OCI-LY7 (cell line): ENCODE measurements at regions of chr1 and their contacts with region 1.

Region 1: DNA sequence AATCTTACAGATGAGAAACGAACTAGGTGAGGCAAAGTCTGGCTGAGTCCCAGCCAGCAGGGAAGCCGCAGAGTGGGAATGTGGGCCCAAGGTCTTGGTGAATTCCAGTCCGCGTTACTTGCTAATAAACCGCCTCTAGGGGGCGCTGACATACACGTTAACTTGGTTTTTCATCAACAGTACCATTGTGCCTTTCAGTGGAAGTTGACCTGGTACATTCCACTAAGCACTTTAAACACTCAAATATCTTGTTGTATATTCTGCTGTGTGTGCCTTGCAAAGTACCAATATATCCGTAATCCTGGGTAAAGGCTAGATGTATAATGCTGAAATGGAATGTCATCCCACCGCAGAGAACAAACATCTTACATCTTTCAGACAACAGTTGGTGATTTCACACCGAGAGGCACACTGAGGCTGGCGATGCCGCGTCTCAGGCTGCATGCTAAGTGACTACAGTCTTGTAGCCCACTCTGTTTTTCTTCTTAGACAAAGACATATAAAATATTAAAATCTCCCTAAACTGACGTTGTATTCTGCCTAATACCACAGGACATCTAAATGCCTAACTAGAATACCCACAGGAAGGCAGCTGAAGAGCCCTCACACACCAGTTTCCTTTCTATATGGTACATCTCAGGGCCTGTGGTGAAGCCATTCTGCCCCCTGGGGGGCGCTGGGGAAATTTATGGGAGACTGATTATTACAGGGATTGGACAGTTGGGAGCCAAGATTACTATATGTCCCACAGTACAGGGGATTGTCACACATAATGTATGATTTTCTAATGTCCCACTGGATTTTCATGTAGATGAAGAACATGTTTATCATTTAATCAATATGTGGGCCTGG is 49.2 kb upstream of the C1orf198 start:
- DNase-seq: peak; percentile 84
- H3K4me3 ChIP-seq: no peak overlapping the region
- H3K27ac ChIP-seq: no peak overlapping the region
- H3K4me1 ChIP-seq: no peaks in the 10 kb centered on the region
- CTCF ChIP-seq: peak; percentile 90

Region 2: GRCh38 chr1:230632273-230632873 is 285.1 kb before region 1 on chr1:
- CTCF ChIA-PET with region 1: no interaction called
- POLR2A ChIA-PET with region 1: no interaction called
- intact Hi-C with region 1: loop called (anchors 5 kb)
- DNase-seq: peak; percentile 51
- H3K4me3 ChIP-seq: no peak overlapping the region
- H3K27ac ChIP-seq: no peak overlapping the region
- H3K4me1 ChIP-seq: no peaks in the 10 kb centered on the region
- CTCF ChIP-seq: peak; percentile 79

Region 3: GRCh38 chr1:230948301-230948700 is 30.8 kb after region 1 on chr1:
- CTCF ChIA-PET with region 1: no interaction called
- POLR2A ChIA-PET with region 1: no interaction called
- intact Hi-C with region 1: no loop called
- DNase-seq: peak; percentile 4
- H3K4me3 ChIP-seq: no peak overlapping the region
- H3K27ac ChIP-seq: no peak overlapping the region
- H3K4me1 ChIP-seq: peaks cover 8% of the 10 kb centered on the region
- CTCF ChIP-seq: no peak

Region 4: GRCh38 chr1:231091831-231092301 is 174.4 kb after region 1 on chr1:
- CTCF ChIA-PET with region 1: no interaction called
- POLR2A ChIA-PET with region 1: no interaction called
- intact Hi-C with region 1: loop called (anchors 2 kb)
- DNase-seq: peak; percentile 34
- H3K4me3 ChIP-seq: no peak overlapping the region
- H3K27ac ChIP-seq: no peak overlapping the region
- H3K4me1 ChIP-seq: no peaks in the 10 kb centered on the region
- CTCF ChIP-seq: peak; percentile 78

Region 5: GRCh38 chr1:231211005-231211857 is 293.7 kb after region 1 on chr1:
- CTCF ChIA-PET with region 1: no interaction called
- POLR2A ChIA-PET with region 1: no interaction called
- intact Hi-C with region 1: loop called (anchors 1 kb)
- DNase-seq: peak; percentile 93
- H3K4me3 ChIP-seq: peak overlapping the region; percentile 54
- H3K27ac ChIP-seq: peak overlapping the region; percentile 31
- H3K4me1 ChIP-seq: peaks cover 32% of the 10 kb centered on the region
- CTCF ChIP-seq: peak; percentile 89

Region 6: GRCh38 chr1:231603598-231604275 is 686.2 kb after region 1 on chr1:
- CTCF ChIA-PET with region 1: no interaction called
- POLR2A ChIA-PET with region 1: no interaction called
- intact Hi-C with region 1: loop called (anchors 5 kb)
- DNase-seq: peak; percentile 65
- H3K4me3 ChIP-seq: peak overlapping the region; percentile 66
- H3K27ac ChIP-seq: no peak overlapping the region
- H3K4me1 ChIP-seq: no peaks in the 10 kb centered on the region
- CTCF ChIP-seq: peak; percentile 97